Common myeloid progenitor, CD34-positive (primary cell): ENCODE measurements at regions of chr9 and their contacts with region 1.

Region 1: GRCh38 chr9:123349691-123350480 is 6.1 kb upstream of the CRB2 start:
- DNase-seq: peak; percentile 61 to 79 (median 73)
- H3K4me3 ChIP-seq: peak overlapping the region in 2 of 7 experiments; percentile 8 to 45
- H3K27ac ChIP-seq: no peak overlapping the region
- H3K4me1 ChIP-seq: peaks cover 0 to 15% (median 11%) of the 10 kb centered on the region in 4 experiments
- H3K27me3 ChIP-seq: peaks cover 0 to 2% (median 0%) of the 10 kb centered on the region in 5 experiments

Region 2: DNA sequence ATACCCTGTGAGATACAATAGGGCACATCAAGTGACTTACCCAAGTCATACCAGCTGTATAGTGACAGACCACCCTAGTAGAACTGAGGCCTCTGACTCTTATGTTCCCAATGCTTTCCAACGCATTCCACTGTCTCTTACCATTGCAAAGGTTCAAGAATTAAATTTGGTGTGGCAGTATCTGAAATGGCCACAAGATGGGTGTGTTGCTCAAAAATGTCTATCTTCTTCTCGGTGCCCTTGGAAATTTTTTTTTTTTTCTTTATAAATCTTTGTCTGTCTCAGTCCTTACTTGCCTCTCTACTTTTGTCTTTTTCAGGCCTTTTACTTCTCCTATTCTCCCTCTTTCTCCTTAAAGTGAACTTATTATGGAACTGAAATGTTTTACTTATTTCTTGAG is 268.1 kb before region 1 on chr9:
- CTCF ChIA-PET with region 1: interaction called, 101 read pairs
- POLR2A ChIA-PET with region 1: no interaction called
- DNase-seq: peak; percentile 58 to 76 (median 74)
- H3K4me3 ChIP-seq: no peak overlapping the region
- H3K27ac ChIP-seq: no peak overlapping the region
- H3K4me1 ChIP-seq: peaks cover 8 to 20% (median 16%) of the 10 kb centered on the region in 4 experiments
- H3K27me3 ChIP-seq: no peaks in the 10 kb centered on the region

Region 3: GRCh38 chr9:123102375-123103110 is 247.3 kb before region 1 on chr9:
- CTCF ChIA-PET with region 1: interaction called, 24 read pairs
- POLR2A ChIA-PET with region 1: interaction called, 5 read pairs
- DNase-seq: no peak
- H3K4me3 ChIP-seq: no peak overlapping the region
- H3K27ac ChIP-seq: peak overlapping the region in 1 of 2 experiments; percentile 6
- H3K4me1 ChIP-seq: no peaks in the 10 kb centered on the region
- H3K27me3 ChIP-seq: no peaks in the 10 kb centered on the region

Region 4: GRCh38 chr9:123225374-123225813 is 124.5 kb before region 1 on chr9:
- CTCF ChIA-PET with region 1: interaction called, 12 read pairs
- POLR2A ChIA-PET with region 1: no interaction called
- DNase-seq: peak; percentile 79 to 94 (median 93)
- H3K4me3 ChIP-seq: no peak overlapping the region
- H3K27ac ChIP-seq: no peak overlapping the region
- H3K4me1 ChIP-seq: peaks cover 2 to 13% (median 6%) of the 10 kb centered on the region in 4 experiments
- H3K27me3 ChIP-seq: no peaks in the 10 kb centered on the region

Region 5: GRCh38 chr9:123360161-123361085 is 10.5 kb after region 1 on chr9:
- CTCF ChIA-PET with region 1: interaction called, 17 read pairs
- POLR2A ChIA-PET with region 1: no interaction called
- DNase-seq: peak; percentile 77 to 90 (median 87)
- H3K4me3 ChIP-seq: peak overlapping the region in 3 of 7 experiments; percentile 11 to 31 (median 24)
- H3K27ac ChIP-seq: peak overlapping the region in 1 of 2 experiments; percentile 14
- H3K4me1 ChIP-seq: peaks cover 0 to 28% (median 14%) of the 10 kb centered on the region in 4 experiments
- H3K27me3 ChIP-seq: no peaks in the 10 kb centered on the region

Region 6: GRCh38 chr9:123389070-123389469 is 39.2 kb after region 1 on chr9:
- CTCF ChIA-PET with region 1: interaction called, 225 read pairs
- POLR2A ChIA-PET with region 1: no interaction called
- DNase-seq: no peak
- H3K4me3 ChIP-seq: no peak overlapping the region
- H3K27ac ChIP-seq: no peak overlapping the region
- H3K4me1 ChIP-seq: peaks cover 0 to 5% (median 1%) of the 10 kb centered on the region in 4 experiments
- H3K27me3 ChIP-seq: no peaks in the 10 kb centered on the region